ENCODE measurements at regions of chr10 and their contacts with region 1.

Region 1: GRCh38 chr10:31031558-31032257 is at the start of gene ZNF438:
- DNase-seq: peak; percentile 96
- ATAC-seq: peak; percentile 81
- H3K4me3 Mint-ChIP-seq: peak within 1 kb of the TSS; percentile 81
- H3K27ac Mint-ChIP-seq: peak within 1 kb of the TSS; percentile 99
- H3K4me1 Mint-ChIP-seq: peaks cover 19% of the 10 kb centered on the region
- H3K27me3 Mint-ChIP-seq: no peaks in the 10 kb centered on the region
- total RNA-seq, gene ZNF438: 3.1 to 3.7 TPM

Region 2: GRCh38 chr10:30348378-30348776 is 683.3 kb before region 1 on chr10:
- CTCF ChIA-PET with region 1: no interaction called
- POLR2A ChIA-PET with region 1: no interaction called
- intact Hi-C with region 1: loop called in 1 of 2 experiments (anchors 1 kb)
- DNase-seq: no peak
- ATAC-seq: peak; percentile 28
- H3K4me3 Mint-ChIP-seq: peak overlapping the region; percentile 91
- H3K27ac Mint-ChIP-seq: peak overlapping the region; percentile 98
- H3K4me1 Mint-ChIP-seq: peaks cover 38% of the 10 kb centered on the region
- H3K27me3 Mint-ChIP-seq: no peaks in the 10 kb centered on the region

Region 3: GRCh38 chr10:30986053-30986555 is 45.6 kb before region 1 on chr10:
- CTCF ChIA-PET with region 1: interaction called, 7 read pairs
- POLR2A ChIA-PET with region 1: no interaction called
- intact Hi-C with region 1: loop called in 1 of 2 experiments (anchors 1 kb)
- DNase-seq: no peak
- ATAC-seq: peak; percentile 93
- H3K4me3 Mint-ChIP-seq: no peak overlapping the region
- H3K27ac Mint-ChIP-seq: no peak overlapping the region
- H3K4me1 Mint-ChIP-seq: peaks cover 11% of the 10 kb centered on the region
- H3K27me3 Mint-ChIP-seq: no peaks in the 10 kb centered on the region

Region 4: GRCh38 chr10:31133628-31134302 is 102.1 kb after region 1 on chr10:
- CTCF ChIA-PET with region 1: interaction called, 4 read pairs
- POLR2A ChIA-PET with region 1: no interaction called
- intact Hi-C with region 1: loop called in 1 of 2 experiments (anchors 1 kb)
- DNase-seq: peak; percentile 84
- ATAC-seq: peak; percentile 52
- H3K4me3 Mint-ChIP-seq: peak overlapping the region; percentile 75
- H3K27ac Mint-ChIP-seq: peak overlapping the region; percentile 55
- H3K4me1 Mint-ChIP-seq: peaks cover 42% of the 10 kb centered on the region
- H3K27me3 Mint-ChIP-seq: no peaks in the 10 kb centered on the region

Region 5: DNA sequence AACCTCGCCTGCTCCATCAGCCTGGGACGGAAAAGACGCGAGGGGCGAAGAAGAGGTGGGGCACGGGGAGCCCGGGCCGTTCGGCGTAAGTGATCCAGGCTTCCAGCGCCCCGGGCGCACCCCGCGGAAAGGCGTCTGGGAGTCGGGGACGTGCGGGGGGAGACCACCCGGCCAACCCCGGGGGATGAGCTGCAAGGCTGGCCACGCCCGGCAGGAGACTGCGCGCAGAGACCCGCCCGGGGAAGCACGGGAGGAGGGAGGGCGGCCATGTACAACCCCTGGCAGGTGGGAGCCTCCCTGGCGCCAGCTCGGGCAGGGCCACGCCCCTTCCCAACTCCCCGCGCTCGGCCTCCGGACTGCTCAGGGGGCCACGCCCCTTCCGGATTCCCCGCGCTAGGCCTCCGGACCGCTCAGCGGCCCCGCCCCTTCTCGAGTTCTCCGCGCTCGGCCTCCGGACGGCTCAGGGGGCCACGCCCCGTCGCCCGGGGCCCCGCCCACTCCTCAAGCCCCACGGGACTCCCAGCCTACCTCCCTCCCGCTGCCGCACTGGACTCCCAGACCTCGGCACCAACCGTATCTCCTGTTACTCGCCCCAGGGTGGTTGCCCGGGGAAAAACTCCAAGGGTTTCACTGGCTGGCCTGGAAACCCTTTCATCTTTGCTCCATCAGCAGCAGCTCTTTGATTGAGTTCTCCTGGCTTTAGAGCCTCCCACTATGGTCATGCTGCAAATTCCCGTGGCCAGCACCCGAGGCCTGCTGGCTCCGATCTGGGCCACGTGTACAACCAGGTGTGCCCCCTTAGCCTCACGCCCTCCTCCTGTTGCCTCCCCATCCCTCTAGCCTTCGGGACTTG is 571.8 kb after region 1 on chr10:
- CTCF ChIA-PET with region 1: no interaction called
- POLR2A ChIA-PET with region 1: no interaction called
- intact Hi-C with region 1: loop called in 1 of 2 experiments (anchors 1 kb)
- DNase-seq: peak; percentile 94
- ATAC-seq: peak; percentile 92
- H3K4me3 Mint-ChIP-seq: peak overlapping the region; percentile 76
- H3K27ac Mint-ChIP-seq: peak overlapping the region; percentile 17
- H3K4me1 Mint-ChIP-seq: peaks cover 33% of the 10 kb centered on the region
- H3K27me3 Mint-ChIP-seq: peaks cover 2% of the 10 kb centered on the region

Region 6: DNA sequence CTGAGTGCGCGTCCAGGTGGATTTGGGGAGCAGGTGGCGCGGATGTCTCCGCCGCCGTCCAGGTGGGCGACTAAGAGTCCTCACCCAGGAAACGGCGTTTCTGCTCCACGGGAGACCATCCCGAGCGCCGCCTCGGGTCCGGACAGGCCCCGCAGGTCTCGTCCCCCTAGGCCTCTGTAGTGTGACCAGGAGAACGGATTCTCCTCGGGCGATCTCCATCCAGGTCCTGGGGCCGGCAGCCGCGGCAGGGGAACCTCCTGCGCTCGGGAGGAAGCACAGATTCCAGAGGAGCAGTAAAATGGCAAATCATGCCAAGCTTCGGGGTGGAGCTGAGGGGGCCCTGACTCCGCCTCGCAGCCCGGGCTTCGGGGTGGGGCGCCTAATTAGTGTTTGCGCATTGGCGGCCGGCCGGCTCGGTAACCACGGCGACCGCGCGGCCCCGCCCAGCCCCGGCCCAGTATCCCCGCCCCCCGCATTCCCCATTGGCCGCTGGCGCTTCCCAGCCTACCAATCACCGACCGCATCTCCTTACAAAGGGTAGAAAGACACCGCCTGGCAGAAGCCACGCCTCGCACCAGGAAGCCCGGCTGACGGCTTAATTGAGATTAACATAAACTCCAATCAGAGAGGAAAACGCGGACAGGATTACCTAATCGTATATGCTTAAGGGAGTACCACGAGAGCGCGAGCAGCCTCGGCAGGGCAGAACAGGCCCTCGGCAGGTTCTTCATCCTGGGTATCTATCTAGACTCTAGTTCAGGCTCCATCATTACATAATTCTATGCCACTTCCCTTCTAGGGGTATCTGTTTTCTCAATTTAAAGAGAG is 728.3 kb after region 1 on chr10:
- CTCF ChIA-PET with region 1: no interaction called
- POLR2A ChIA-PET with region 1: interaction called, 4 read pairs
- intact Hi-C with region 1: loop called (anchors 1 to 5 kb)
- DNase-seq: peak; percentile 97
- ATAC-seq: peak; percentile 94
- H3K4me3 Mint-ChIP-seq: peak overlapping the region; percentile 91
- H3K27ac Mint-ChIP-seq: peak overlapping the region; percentile 94
- H3K4me1 Mint-ChIP-seq: peaks cover 15% of the 10 kb centered on the region
- H3K27me3 Mint-ChIP-seq: no peaks in the 10 kb centered on the region

Measured in activated CD4-positive, alpha-beta T cell treated with anti-CD3 and anti-CD28 coated beads for 36 hours (primary cell).